AG04450 (cell line): ENCODE measurements at regions of chr3 and their contacts with region 1.

Region 1: DNA sequence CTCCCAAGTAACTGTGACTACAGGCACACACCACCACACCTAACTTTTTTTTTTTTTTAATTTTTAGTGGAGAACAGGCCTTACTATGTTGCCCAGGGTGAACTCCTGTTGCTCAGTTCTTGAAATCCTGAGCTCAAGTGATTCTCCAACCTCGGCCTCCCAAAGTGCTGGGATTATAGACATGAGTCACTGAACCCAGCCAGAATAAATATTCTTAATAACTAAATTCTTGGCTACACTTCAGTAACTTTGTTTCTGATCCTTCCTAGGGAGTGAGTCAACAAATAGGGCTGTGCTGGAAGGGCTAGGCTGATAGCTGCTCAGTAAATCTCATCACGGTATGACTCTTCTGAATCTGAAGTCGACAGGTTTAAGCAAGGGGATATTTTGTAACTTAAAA is 56.6 kb downstream of the P3H2 start:
- DNase-seq: peak; percentile 74
- H3K4me3 ChIP-seq: no peak overlapping the region
- H3K27ac ChIP-seq: peak overlapping the region; percentile 72
- H3K27me3 ChIP-seq: no peaks in the 10 kb centered on the region
- CTCF ChIP-seq: no peak

Region 2: GRCh38 chr3:189766437-189766836 is 297.7 kb before region 1 on chr3:
- CTCF ChIA-PET with region 1: no interaction called
- POLR2A ChIA-PET with region 1: no interaction called
- DNase-seq: no peak
- H3K4me3 ChIP-seq: no peak overlapping the region
- H3K27ac ChIP-seq: no peak overlapping the region
- H3K27me3 ChIP-seq: no peaks in the 10 kb centered on the region
- CTCF ChIP-seq: no peak

Region 3: DNA sequence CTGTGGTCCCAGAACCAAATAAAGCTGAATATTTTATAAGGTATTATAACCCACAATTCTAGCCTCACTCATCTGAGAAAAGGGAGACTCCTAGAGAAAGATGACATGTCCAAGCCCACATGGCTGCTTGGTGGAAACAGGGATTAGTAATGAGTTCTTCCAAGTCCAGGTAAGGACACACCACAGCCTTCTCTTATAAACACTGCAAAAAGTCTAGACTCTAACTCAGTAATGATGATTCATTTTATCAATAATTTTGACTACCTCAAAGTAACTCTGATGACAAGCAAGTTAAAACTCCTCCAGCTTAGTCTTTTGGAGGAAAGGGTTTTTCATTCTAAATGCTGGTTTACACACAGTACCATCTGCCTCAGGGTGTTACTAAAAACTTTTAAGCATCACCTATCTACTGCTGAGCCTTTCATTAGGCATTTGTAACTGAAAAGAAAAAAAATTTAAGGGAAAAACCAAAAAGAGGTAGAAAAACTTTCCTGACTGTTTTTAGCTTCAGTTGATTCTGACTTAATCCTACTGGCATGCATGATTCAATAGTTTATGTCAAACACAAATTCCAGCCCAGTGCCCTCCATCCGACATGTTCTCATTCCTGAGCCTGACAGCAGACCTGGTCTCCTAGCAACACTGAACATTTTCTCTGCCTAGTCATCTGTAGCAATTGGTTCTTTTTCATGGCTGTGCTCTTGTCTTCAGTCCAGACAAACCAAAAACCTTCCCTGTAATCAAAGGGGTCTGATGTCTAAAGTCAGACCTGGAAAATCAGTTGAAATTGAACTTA is 12.7 kb after region 1 on chr3:
- CTCF ChIA-PET with region 1: interaction called, 3 read pairs
- POLR2A ChIA-PET with region 1: interaction called, 10 read pairs
- DNase-seq: peak; percentile 92
- H3K4me3 ChIP-seq: no peak overlapping the region
- H3K27ac ChIP-seq: peak overlapping the region; percentile 88
- H3K27me3 ChIP-seq: no peaks in the 10 kb centered on the region
- CTCF ChIP-seq: no peak